ENCODE measurements at regions of chr4 and their contacts with region 1.

Region 1: DNA sequence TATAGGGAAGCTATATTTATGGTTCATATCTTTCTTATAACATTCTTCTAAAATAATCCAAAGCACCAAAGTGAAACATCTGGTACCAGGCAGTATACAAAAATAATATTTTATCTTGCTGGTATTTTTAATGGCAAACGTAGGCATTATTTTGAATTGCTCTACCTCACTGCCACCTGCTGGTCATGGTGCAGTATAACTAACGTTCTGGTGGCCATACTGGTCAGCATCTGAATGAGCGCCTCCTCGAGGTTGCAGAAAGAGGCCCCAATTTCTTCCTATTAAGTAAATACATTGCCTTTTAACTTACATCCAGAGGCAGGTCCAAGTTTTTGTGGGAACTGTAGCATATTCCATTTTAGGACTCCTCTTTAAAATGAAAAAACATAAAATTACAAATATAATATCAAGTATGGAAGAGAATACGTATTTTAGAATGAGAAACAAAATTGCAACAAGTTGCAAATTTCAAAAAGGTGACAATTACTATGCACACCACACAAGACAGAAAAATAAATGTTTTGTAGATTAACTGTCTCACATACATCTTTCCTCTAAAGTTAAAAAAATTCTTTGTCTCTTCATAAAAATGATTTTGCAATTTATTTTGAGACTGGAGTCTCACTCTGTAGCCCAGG is 22.9 kb upstream of the CWH43 start:
- DNase-seq: peak; percentile 90
- ATAC-seq: peak; percentile 98
- H3K4me3 ChIP-seq: no peak overlapping the region
- H3K27ac ChIP-seq: no peak overlapping the region
- H3K4me1 ChIP-seq: peaks cover 2% of the 10 kb centered on the region; the same call in 1 of the 2 replicates
- H3K27me3 ChIP-seq: peaks cover 2% of the 10 kb centered on the region; the same call in 1 of the 2 replicates
- CTCF ChIP-seq: peak; percentile 100
- POLR2A ChIP-seq: peak; percentile 60; the same call in 1 of the 2 replicates
- RAD21 ChIP-seq: peak; percentile 98

Region 2: DNA sequence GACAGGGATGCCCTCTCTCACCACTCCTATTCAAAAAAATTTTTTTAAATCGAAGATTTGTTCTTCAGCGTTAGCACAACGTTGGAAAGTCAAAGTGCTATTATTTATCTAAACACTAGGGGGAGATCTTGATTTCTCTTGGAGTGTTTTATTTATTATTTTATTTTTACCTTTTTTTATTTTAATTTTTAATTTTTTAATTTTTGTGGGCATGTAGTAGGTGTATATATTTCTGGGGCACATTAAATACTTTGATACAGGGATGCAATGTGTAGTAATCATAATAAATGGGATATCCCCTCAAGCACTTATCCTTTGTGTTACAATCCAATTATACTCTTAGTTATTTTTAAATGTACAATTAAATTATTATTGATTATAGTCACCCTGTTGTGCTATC is 517.5 kb before region 1 on chr4:
- CTCF ChIA-PET with region 1: no interaction called
- POLR2A ChIA-PET with region 1: no interaction called
- dilution Hi-C with region 1: no loop called
- in situ Hi-C with region 1: no loop called
- intact Hi-C with region 1: loop called (anchors 1 kb)
- DNase-seq: peak; percentile 12
- ATAC-seq: peak; percentile 59
- H3K4me3 ChIP-seq: no peak overlapping the region
- H3K27ac ChIP-seq: no peak overlapping the region
- H3K4me1 ChIP-seq: no peaks in the 10 kb centered on the region
- H3K27me3 ChIP-seq: peaks cover 4% of the 10 kb centered on the region
- CTCF ChIP-seq: peak; percentile 47
- POLR2A ChIP-seq: no peak
- RAD21 ChIP-seq: peak; percentile 42

Region 3: GRCh38 chr4:48681856-48682255 is 281.3 kb before region 1 on chr4:
- CTCF ChIA-PET with region 1: no interaction called
- POLR2A ChIA-PET with region 1: no interaction called
- dilution Hi-C with region 1: no loop called
- in situ Hi-C with region 1: no loop called
- intact Hi-C with region 1: loop called (anchors 1 kb)
- DNase-seq: peak; percentile 52
- ATAC-seq: peak; percentile 66; the same call in 1 of the 2 replicates
- H3K4me3 ChIP-seq: no peak overlapping the region
- H3K27ac ChIP-seq: no peak overlapping the region
- H3K4me1 ChIP-seq: no peaks in the 10 kb centered on the region; the same call in 1 of the 2 replicates
- H3K27me3 ChIP-seq: no peaks in the 10 kb centered on the region
- CTCF ChIP-seq: peak; percentile 56
- POLR2A ChIP-seq: no peak
- RAD21 ChIP-seq: peak; percentile 65

Region 4: GRCh38 chr4:48844843-48845242 is 118.3 kb before region 1 on chr4:
- CTCF ChIA-PET with region 1: interaction called, 3 read pairs
- POLR2A ChIA-PET with region 1: no interaction called
- dilution Hi-C with region 1: no loop called
- in situ Hi-C with region 1: no loop called
- intact Hi-C with region 1: loop called (anchors 5 kb)
- DNase-seq: no peak
- ATAC-seq: no peak
- H3K4me3 ChIP-seq: no peak overlapping the region
- H3K27ac ChIP-seq: no peak overlapping the region
- H3K4me1 ChIP-seq: no peaks in the 10 kb centered on the region
- H3K27me3 ChIP-seq: no peaks in the 10 kb centered on the region
- CTCF ChIP-seq: no peak
- POLR2A ChIP-seq: no peak
- RAD21 ChIP-seq: no peak

Measured in IMR-90 (cell line).